ENCODE measurements at regions of chr14 and their contacts with region 1.

Region 1: GRCh38 chr14:25090716-25091454 is 40.9 kb upstream of the STXBP6 start:
- DNase-seq: peak; percentile 79 to 88
- H3K4me3 ChIP-seq: peak overlapping the region; percentile 16; the same call in 1 of the 2 replicates
- H3K4me3 Mint-ChIP-seq: peak overlapping the region; percentile 58
- H3K27ac Mint-ChIP-seq: peak overlapping the region; percentile 89
- H3K4me1 ChIP-seq: peaks cover 57% of the 10 kb centered on the region
- H3K4me1 Mint-ChIP-seq: peaks cover 51% of the 10 kb centered on the region
- H3K27me3 ChIP-seq: no peaks in the 10 kb centered on the region
- H3K27me3 Mint-ChIP-seq: no peaks in the 10 kb centered on the region
- CTCF ChIP-seq: no peak

Region 2: GRCh38 chr14:25049568-25050268 is 41.2 kb before region 1 on chr14 and contains the start of gene STXBP6:
- CTCF ChIA-PET with region 1: no interaction called
- POLR2A ChIA-PET with region 1: no interaction called
- intact Hi-C with region 1: loop called (anchors 1 kb)
- DNase-seq: peak; percentile 74 to 85
- H3K4me3 ChIP-seq: peak within 1 kb of the TSS; percentile 87
- H3K4me3 Mint-ChIP-seq: peak within 1 kb of the TSS; percentile 84
- H3K27ac Mint-ChIP-seq: peak within 1 kb of the TSS; percentile 76
- H3K4me1 ChIP-seq: peaks cover 10% of the 10 kb centered on the region; the same call in 1 of the 2 replicates
- H3K4me1 Mint-ChIP-seq: peaks cover 11% of the 10 kb centered on the region
- H3K27me3 ChIP-seq: no peaks in the 10 kb centered on the region
- H3K27me3 Mint-ChIP-seq: no peaks in the 10 kb centered on the region
- CTCF ChIP-seq: no peak
- total RNA-seq, gene STXBP6: 32.2 and 35.7 TPM in 2 replicates

Region 3: DNA sequence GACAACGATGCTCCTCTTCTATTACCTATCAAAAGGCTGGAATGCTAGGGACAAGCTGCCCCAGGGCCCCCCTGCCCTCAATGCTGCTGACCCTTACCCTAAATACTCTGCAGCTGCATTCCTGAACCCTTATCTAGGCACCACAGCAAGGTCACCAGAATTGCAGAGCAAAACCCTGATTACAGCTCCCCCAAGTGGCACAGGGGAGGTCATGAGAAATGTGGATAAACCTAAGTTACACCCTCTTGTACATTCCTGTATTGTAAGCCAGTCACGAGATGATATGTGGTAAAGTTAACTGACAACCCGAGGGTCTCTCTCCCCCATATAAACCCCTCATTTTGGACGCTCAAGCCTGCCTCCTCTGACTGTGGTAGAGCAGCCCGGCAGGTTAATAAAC is 370.9 kb after region 1 on chr14:
- CTCF ChIA-PET with region 1: no interaction called
- POLR2A ChIA-PET with region 1: no interaction called
- intact Hi-C with region 1: no loop called
- DNase-seq: no peak
- H3K4me3 ChIP-seq: no peak overlapping the region
- H3K4me3 Mint-ChIP-seq: no peak overlapping the region
- H3K27ac Mint-ChIP-seq: no peak overlapping the region
- H3K4me1 ChIP-seq: no peaks in the 10 kb centered on the region
- H3K4me1 Mint-ChIP-seq: no peaks in the 10 kb centered on the region
- H3K27me3 ChIP-seq: no peaks in the 10 kb centered on the region
- H3K27me3 Mint-ChIP-seq: no peaks in the 10 kb centered on the region
- CTCF ChIP-seq: no peak